ENCODE measurements at regions of chr21 and their contacts with region 1.

Region 1: DNA sequence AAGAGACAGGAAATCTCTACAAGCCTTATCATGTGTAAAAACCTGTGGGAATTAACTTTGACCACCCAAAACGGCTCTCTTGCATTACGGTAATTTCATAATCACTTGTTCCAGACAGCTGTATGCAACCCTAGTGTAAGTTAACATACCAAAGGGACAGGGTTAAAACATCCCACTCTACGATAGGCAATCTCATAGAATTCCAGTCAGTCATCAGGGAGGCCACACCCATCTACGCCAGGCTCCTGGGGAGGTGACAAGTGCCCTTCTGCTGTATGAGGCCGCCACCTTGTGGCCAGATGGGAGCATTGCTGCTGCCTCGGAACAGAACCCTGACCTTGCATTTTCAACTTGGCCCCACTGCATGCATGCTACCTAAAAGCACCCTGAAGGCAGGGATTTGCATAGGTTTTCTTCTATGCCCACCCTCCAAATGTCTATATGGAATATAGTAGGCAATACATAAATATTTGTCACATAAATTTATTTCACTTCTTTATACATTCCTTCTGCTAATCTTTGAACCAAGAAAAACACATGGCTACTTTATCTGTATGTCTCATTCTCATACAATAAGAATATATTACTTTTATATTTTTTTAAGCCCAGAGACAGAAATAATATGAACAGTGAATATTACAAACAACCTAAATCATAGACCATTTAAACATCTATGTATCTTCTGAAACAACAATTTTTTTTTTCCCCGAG is 12.6 kb downstream of the HSF2BP start:
- DNase-seq: peak; percentile 90
- H3K4me3 Mint-ChIP-seq: no peak overlapping the region
- H3K27ac Mint-ChIP-seq: no peak overlapping the region
- H3K4me1 Mint-ChIP-seq: peaks cover 16% of the 10 kb centered on the region
- H3K27me3 Mint-ChIP-seq: peaks cover 3% of the 10 kb centered on the region

Region 2: DNA sequence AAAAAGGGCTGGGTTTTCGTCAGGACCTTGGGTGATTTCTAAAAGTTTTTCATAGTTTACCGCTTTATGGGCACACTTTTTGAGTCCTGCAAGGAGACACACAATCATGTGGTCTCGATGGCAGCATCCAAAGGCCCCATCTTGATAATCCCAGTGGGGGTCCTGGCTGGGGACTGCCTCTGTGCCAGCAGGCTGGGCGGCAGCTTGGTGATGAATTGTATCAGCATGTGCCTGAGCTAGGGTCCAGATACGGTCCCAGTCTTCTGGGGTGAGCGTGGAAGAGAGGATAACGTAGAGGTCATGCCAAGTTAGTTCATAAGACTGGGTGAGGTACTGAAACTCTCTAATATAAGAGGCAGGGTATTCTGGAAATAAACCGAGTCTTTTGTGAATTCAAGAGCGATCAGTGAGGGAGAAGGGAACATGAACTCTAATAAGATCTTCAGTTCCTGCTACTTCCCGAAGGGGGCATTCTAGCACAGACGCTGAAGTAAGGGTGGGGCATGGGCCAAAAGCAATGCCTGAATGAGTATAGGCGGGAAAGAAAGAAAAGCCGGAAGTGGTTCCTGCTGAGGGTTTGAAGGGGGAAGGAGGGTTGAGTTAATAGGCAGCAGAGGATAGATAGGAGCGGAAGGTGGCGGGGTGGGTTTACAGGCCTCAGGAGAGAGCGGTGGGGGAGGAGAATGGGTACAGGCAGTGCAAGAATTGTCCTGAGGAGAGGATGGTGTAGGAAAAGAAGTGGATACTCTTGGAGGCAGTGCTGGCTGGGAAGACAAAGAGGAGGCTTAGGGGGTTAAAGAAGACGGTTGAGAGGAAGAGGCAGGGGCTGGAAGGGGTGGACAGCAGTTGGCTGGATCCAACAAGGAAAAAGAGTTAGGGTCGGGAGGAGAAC is 722.9 kb before region 1 on chr21:
- CTCF ChIA-PET with region 1: no interaction called
- POLR2A ChIA-PET with region 1: no interaction called
- intact Hi-C with region 1: loop called (anchors 5 kb)
- DNase-seq: peak; percentile 84
- H3K4me3 Mint-ChIP-seq: peak overlapping the region; percentile 17
- H3K27ac Mint-ChIP-seq: peak overlapping the region; percentile 38
- H3K4me1 Mint-ChIP-seq: peaks cover 10% of the 10 kb centered on the region
- H3K27me3 Mint-ChIP-seq: no peaks in the 10 kb centered on the region

Region 3: DNA sequence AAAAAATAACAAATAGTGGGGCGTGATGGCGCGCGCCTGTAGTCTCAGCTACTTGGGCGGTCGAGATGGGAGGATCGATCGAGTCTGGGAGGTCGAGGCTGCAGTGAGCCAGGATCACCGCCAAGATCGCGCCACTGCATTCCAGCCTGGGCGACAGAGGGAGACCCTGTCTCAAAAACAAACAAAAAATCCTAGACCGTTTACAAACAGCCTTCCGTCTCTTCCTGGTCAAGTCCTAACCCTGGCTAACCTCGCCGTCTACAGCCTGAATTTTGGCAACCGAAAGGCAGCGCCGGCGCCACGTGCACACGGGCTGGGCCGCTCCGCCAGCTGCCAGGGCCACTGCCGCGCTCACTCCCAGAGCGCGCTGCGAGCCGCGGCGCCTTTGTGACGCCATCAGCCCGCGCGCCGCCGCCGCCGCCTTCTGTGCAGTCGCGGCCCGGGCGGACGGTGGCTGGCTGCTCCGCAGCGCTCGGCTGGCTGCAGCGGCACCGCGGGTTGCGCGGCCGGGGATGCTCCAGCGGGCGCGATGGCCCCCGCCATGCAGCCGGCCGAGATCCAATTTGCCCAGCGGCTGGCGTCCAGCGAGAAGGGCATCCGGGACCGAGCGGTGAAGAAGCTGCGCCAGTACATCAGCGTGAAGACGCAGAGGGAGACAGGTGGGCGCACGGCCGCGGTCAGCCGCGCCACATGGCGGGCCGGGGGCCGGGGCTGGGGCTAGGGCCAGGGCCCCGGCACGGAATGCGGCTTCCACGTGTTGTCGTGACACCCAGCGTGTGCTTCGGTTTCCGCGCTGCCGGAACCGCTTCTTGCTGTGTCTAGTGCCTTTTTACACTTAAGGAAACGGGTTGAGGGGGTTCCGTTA is 12.7 kb after region 1 on chr21 and contains the starts of genes HSF2BP and RRP1B:
- CTCF ChIA-PET with region 1: interaction called, 5 read pairs
- POLR2A ChIA-PET with region 1: interaction called, 3 read pairs
- intact Hi-C with region 1: loop called (anchors 2 kb)
- DNase-seq: peak; percentile 87
- H3K4me3 Mint-ChIP-seq: peak within 1 kb of the TSS; percentile 92
- H3K27ac Mint-ChIP-seq: peak within 1 kb of the TSS; percentile 95
- H3K4me1 Mint-ChIP-seq: peaks cover 43% of the 10 kb centered on the region
- H3K27me3 Mint-ChIP-seq: no peaks in the 10 kb centered on the region
- total RNA-seq, gene HSF2BP: 0.50 to 0.73 TPM
- total RNA-seq, gene RRP1B: 66.7 to 69.9 TPM

Region 4: DNA sequence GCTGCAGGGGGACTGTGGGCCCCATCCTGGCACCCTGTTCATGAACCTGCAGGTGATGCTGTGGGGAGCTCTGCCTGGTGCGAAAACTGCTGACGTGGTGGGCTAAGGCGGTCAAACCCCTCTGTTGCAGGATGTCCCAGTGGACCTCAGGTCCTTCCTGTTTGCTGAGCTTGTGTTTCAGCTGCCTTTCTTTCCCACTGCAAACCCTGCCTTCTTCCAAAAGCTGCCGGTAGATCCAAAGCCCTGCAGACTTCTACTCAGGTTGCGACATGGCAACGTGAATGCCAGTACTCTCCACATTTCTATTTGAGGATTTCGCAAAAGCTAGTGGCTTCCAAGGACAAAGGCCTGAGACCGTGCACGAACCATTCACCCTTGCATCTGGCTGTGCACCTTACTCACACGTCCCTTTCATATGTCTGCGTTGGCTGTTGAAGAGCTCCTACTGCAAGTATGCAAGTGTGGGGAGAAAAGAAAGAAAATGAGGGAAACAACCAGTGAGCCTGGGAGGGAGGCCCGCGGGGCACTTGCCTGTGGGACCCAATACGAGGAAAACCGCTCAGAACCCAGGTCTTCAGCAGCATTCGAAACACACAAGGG is 136.5 kb after region 1 on chr21:
- CTCF ChIA-PET with region 1: no interaction called
- POLR2A ChIA-PET with region 1: no interaction called
- intact Hi-C with region 1: no loop called
- DNase-seq: peak; percentile 26
- H3K4me3 Mint-ChIP-seq: no peak overlapping the region
- H3K27ac Mint-ChIP-seq: peak overlapping the region; percentile 97
- H3K4me1 Mint-ChIP-seq: peaks cover 37% of the 10 kb centered on the region
- H3K27me3 Mint-ChIP-seq: no peaks in the 10 kb centered on the region